ENCODE measurements at regions of chr2 and their contacts with region 1.

Region 1: DNA sequence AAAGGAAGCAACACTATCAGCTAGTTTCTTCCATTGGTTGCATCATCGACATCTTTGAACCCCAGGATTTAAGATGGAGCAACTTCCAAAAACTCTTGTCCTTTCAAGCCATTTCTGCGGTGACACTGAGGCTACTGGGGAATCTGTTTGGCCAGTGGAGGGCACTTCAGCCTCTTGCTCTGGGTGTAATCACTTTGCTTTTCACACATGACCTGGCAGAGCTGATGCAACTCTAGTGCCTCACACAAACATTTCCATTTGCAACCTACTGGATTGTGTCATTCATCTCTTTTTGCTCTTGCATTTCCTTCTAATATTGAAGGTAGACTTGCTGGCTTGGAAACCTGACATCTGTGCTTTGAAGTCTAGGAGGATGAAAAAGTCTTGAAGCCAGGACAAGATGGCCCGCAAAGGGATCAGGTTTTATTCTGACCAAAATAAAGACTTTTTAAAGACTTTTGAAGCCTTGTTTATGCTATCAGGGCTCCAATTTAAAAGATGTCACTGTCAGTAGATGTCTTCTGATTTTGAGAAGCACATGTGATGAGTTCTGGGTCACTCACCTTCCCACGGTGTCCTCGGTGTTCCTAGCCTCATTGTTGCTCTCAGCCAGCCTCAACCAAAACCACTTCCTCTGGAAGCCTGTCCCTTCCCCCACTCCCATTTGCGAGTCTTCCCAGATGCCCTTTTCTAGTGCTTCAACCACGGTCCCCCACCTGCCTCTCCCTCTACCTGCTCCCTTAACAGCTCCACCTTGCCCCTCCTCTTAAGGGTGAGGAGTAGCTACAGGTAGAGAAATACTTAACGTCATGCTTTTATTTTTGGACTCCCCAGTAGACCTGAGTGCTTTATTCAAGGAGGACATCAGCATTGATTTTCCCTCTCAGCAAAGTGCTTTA is 69.7 kb upstream of the KCNE4 start:
- DNase-seq: peak in 9 of 10 donors; percentile 13 to 70 (median 49)
- H3K4me3 ChIP-seq: no peak overlapping the region
- H3K27ac ChIP-seq: no peak overlapping the region
- H3K27me3 ChIP-seq: no peaks in the 10 kb centered on the region
- CTCF ChIP-seq: peak; percentile 20 to 87 (median 68)

Region 2: DNA sequence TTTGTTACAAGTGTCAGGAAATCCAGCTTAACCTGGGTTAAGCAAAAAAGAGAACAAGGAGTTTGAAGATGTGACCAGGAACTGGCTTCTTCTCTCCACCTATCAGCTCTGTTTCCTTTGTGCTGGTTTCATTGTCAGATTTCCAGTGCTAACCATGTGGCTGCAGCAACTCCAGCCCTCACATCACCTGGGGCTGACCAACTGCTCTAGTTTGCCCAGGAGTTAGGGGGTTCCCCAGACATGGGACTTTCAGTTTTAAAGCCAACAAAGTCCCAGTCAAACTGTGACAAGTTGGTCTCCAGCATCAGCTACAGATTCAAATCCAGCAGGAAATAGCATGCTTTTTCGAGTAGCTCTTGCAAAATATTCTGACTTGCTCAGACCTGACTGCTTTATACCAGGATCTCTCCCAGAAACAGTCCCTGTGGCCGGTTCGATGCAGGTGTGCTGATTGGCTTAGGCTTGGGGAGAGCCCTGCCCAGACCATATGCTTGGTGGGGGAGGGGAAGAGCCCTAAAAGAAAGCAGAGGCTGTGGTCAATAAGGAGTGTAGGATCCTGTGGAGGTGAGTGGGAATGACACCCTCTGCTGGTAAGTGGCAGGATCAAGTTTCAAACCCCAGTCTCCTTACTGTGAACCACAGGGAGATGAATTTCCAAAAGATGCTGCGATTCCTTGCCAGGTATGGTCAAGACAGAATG is 119.2 kb after region 1 on chr2:
- intact Hi-C with region 1: loop called (anchors 5 kb)
- DNase-seq: no peak
- H3K4me3 ChIP-seq: no peak overlapping the region
- H3K27ac ChIP-seq: peak overlapping the region in 6 of 59 donors; percentile 2 to 66 (median 42)
- H3K27me3 ChIP-seq: no peaks in the 10 kb centered on the region
- CTCF ChIP-seq: peak in 53 of 56 donors; percentile 28 to 72 (median 51)

Region 3: DNA sequence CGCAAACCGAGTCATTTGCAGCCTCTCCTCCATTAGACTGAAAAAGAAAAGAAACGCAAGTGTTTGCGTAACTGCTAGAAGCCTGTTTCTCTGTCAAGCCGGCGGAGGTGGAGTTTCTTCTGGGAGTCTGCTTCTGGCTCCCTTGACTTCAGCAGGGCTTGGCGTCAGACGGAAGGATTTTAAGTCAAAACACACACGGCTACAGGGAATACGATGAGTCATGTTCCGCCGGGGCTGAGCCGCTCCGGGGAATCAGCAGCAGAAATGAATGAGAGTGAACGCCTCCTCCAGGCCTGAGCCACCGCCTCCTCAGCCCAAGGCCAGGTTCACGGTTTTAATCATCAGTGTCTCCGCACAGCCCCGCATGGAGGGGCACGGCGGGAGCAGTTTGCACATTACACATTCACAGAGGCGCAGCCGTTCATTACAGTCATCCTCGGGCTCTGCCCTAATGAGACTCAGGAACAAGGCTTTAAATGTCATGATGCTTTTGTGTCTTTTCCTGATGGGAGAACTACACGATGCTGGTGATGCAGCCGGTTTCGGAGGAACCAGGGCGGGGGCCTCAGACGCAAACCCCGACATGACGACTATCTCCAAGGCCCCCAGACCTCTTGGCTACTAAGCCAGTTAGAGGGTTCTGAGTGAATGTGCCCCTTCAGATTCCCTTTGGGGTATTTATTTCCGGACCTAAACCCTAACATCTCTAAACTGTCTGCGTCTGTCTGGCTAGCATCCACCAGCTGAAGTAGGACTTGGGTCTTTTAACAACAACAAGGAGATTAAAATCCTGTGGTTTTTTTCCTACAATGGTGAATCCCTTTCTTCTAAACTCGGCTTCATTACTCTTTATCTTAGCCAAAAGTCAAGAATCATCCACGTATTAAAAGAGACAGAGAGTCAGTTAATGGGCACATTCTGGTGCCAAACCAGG is 631.0 kb after region 1 on chr2:
- intact Hi-C with region 1: loop called in 1 of 2 experiments (anchors 10 kb)
- DNase-seq: peak; percentile 36 to 93 (median 83)
- H3K4me3 ChIP-seq: peak overlapping the region; percentile 5 to 62 (median 43)
- H3K27ac ChIP-seq: peak overlapping the region in 58 of 59 donors; percentile 15 to 95 (median 85)
- H3K27me3 ChIP-seq: peaks cover 0 to 4% (median 0%) of the 10 kb centered on the region in 45 donors
- CTCF ChIP-seq: peak in 7 of 56 donors; percentile 4 to 25 (median 9)

Measured in dorsolateral prefrontal cortex (tissue), 120 donors.